ENCODE measurements at regions of chr12 and their contacts with region 1.

Region 1: GRCh38 chr12:26346700-26347099 is 151.3 kb downstream of the SSPN start:
- DNase-seq: no peak
- H3K4me3 Mint-ChIP-seq: no peak overlapping the region
- H3K27ac Mint-ChIP-seq: no peak overlapping the region
- H3K4me1 Mint-ChIP-seq: peaks cover 16% of the 10 kb centered on the region
- H3K27me3 Mint-ChIP-seq: no peaks in the 10 kb centered on the region

Region 2: DNA sequence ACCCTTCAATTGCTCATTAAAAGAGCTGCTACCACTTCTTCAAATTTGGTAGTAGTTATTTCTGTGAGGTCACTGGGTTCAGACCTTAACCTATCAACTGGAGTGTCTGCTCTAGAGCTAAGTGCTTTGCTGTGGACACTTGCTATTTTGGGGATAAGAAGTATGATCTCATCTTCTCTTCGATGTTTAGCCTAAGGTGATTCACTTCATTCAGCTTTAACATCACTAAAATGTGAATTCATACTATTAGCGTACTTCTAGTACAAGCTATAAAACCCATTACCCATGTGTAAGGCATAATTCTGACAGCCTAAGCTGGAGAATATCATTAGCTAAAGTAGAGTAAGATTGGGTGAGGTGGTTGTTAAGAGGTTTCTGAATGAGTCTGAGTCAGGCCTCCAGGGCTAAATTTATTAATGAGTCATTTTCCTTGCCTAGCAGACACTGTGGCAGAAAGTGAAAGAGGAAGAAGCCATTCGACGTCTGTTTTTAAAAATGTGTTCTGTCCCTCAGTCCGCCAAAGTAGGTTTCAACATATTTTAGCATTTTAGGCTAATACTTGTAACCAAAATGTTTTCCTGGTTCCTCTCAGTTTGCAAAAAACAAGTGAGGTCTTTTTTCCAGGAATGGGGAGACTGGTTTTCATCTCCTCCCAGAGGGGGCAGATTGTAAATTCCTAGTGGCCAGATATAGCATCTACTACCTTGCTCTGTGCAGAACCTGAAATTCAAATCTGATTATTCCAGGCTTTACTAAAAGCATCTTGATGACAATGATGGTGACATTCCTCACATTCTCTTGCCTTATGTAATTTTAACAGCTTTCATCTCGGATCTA is 47.7 kb before region 1 on chr12:
- intact Hi-C with region 1: loop called (anchors 2 kb)
- DNase-seq: no peak
- H3K4me3 Mint-ChIP-seq: peak overlapping the region; percentile 28
- H3K27ac Mint-ChIP-seq: no peak overlapping the region
- H3K4me1 Mint-ChIP-seq: peaks cover 23% of the 10 kb centered on the region
- H3K27me3 Mint-ChIP-seq: peaks cover 23% of the 10 kb centered on the region

Measured in activated T-helper 2 cell treated with anti-CD3 and anti-CD28 coated beads, Interferon-gamma antibody, Interleukin-2, Interleukin-4, amounts not matched to agents 10 μg/mL and 5 μg/mL and 100 μg/mL, durations not matched to agents 14 hours and 24 hours and 36 hours (primary cell).